ENCODE measurements at regions of chr3 and their contacts with region 1.

Region 1: GRCh38 chr3:113696658-113697499 is 437 bp upstream of the USF3 start:
- DNase-seq: peak; percentile 100
- ATAC-seq: peak; percentile 91 to 92
- H3K4me3 ChIP-seq: peak overlapping the region; percentile 76 to 91 (median 78)
- H3K27ac ChIP-seq: peak overlapping the region; percentile 95 to 99 (median 96)
- H3K4me1 ChIP-seq: peaks cover 48 to 51% of the 10 kb centered on the region in 2 donors
- H3K27me3 ChIP-seq: no peaks in the 10 kb centered on the region
- CTCF ChIP-seq: peak in 2 of 5 experiments; percentile 5 to 24
- POLR2A ChIP-seq: no peak

Region 2: DNA sequence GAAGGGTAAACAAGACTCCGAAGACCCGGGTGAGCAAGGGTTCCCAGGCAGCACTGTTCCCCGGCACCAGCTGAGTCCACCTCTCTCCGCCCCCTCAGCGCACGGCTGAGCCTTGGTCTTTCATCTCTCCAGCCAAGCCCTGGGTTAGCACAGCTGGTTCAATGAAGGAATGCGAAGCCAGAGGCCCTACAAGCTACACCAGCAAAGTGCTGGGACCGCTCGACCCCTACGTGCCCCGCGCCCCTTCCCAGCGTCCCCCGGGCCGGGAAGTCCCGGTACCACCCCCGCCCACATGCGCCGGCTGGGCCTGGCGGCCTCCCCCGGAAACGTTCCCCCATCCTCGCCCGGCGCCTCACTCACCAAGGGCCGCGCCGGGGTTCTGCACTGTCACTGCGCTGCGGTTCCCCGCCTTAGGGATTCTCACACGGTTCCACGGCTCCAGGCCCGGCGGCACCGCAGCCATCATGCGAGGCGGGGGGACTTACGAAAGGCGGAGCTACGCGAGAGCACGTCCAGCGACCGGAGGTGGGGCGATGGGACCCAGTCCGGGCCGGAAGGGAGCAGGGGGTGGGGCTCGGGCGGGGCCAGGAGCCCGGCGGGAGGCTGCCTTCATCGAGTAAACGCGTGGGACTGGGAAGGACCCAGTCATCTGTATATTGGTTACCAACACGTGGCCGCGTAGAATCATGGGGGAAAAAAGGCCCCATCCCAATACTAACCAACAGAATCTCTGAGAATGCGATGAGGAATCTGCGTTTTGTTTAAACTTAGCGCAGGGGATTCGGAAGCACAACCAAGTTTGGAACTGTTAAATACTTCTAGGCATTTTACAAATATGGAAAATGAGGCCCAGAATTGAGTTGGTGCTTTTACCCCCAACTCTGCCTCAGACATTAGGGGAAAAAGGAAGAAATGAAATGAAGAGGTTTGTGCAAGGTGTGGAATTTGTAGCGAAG is 677.4 kb before region 1 on chr3:
- in situ Hi-C with region 1: no loop called
- intact Hi-C with region 1: loop called (anchors 5 kb)
- DNase-seq: peak; percentile 82 to 87
- ATAC-seq: peak; percentile 93 to 94
- H3K4me3 ChIP-seq: peak overlapping the region; percentile 80 to 94 (median 90)
- H3K27ac ChIP-seq: peak overlapping the region; percentile 92 to 97 (median 94)
- H3K4me1 ChIP-seq: peaks cover 12 to 16% of the 10 kb centered on the region in 2 donors
- H3K27me3 ChIP-seq: no peaks in the 10 kb centered on the region
- CTCF ChIP-seq: no peak
- POLR2A ChIP-seq: peak; percentile 51 to 65

Region 3: DNA sequence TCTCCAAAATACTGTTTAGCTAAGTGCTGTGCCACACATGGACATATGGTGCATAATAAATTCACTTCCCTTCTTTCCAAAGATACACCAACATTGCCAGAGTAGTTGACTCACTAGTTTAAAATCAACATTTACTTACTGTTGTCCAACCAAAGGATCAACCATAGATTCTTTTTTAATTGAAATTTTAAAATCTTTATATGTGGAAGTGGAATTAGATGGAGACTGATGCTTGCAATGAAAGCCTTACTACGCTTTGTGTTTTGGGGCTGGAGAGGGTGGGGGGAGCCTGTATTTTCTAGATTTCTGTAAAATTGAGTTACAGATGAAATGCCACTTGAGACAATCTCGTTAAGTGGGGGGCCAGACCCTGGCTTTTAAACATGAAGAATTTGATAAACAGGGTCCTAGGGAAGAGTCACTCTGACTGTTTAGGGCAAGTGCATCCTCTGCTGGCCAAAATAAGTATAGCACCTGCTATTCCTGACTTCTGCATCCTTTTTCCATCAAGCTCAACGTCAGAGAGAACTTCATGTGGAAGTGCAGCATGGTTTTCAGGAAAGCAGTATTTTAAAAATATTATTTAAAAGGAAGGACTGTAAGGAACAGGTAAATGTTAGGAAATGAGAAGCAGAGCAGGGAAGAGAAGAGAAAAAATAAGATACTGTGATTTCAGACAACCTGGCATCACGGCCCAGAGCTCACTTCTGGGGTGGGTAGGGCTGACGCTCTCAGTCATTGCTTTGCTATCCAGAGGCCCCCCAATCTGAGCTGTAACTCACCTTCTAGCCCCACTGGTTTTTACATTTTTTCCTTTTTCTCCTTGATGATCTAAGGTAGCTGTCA is 408.9 kb before region 1 on chr3:
- in situ Hi-C with region 1: no loop called
- intact Hi-C with region 1: no loop called
- DNase-seq: no peak
- ATAC-seq: peak in 1 of 2 donors; percentile 59
- H3K4me3 ChIP-seq: no peak overlapping the region
- H3K27ac ChIP-seq: no peak overlapping the region
- H3K4me1 ChIP-seq: no peaks in the 10 kb centered on the region
- H3K27me3 ChIP-seq: no peaks in the 10 kb centered on the region
- CTCF ChIP-seq: peak; percentile 93 to 99 (median 96)
- POLR2A ChIP-seq: no peak

Region 4: DNA sequence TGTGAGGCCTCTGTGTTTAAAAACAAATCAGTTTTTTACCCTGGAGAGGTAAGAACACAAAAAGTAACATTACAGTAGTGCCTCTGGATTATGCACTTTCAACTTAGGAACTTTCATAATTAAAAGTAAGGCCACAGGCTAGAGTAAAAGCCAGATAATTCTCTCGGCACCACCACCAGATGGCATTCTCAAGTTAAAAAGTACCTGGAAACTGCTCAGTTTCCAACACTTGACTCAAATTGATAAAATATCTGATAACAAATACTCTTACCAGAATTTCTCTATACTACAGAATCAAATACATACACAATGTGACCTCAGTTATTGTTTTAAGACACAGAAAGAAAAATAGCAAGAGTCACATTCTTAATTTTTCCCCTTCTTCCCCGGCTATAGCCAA is 201.8 kb before region 1 on chr3:
- in situ Hi-C with region 1: no loop called
- intact Hi-C with region 1: loop called (anchors 5 kb)
- DNase-seq: peak in 1 of 2 donors; percentile 21
- ATAC-seq: peak; percentile 55 to 60
- H3K4me3 ChIP-seq: no peak overlapping the region
- H3K27ac ChIP-seq: peak overlapping the region in 1 of 4 donors; percentile 11
- H3K4me1 ChIP-seq: no peaks in the 10 kb centered on the region
- H3K27me3 ChIP-seq: no peaks in the 10 kb centered on the region
- CTCF ChIP-seq: peak in 4 of 5 experiments; percentile 4 to 52 (median 42)
- POLR2A ChIP-seq: no peak

Region 5: DNA sequence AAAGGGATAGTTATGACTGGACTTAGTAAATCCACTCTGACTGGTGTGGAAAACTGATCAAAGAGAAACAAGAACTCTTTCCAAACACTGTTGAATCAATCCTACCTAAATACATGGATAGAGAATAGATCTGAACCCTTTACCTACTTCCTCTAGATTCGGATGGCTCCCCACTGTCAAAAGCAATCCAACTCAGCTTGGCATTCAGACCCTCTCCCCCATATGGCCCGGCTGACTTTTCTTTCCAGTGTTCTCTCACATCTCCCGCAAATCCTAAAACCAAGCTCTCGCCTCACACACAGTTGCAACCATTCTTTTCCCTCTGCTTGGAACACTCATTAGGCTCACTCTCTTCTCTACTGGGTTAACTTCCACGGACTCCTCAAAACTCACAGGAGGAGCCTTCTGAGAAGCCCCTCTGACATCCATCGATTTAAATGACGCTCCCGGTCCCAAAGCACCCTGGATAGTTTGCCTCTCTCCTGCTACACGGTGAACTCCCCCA is 182.6 kb before region 1 on chr3:
- in situ Hi-C with region 1: loop called in 1 of 4 experiments (anchors 10 kb)
- intact Hi-C with region 1: no loop called
- DNase-seq: no peak
- ATAC-seq: peak; percentile 20 to 37
- H3K4me3 ChIP-seq: peak overlapping the region; percentile 83 to 94 (median 90)
- H3K27ac ChIP-seq: peak overlapping the region; percentile 81 to 89 (median 86)
- H3K4me1 ChIP-seq: peaks cover 8 to 9% of the 10 kb centered on the region in 2 donors
- H3K27me3 ChIP-seq: peaks cover 0 to 3% (median 0%) of the 10 kb centered on the region in 3 donors
- CTCF ChIP-seq: no peak
- POLR2A ChIP-seq: no peak

Region 6: DNA sequence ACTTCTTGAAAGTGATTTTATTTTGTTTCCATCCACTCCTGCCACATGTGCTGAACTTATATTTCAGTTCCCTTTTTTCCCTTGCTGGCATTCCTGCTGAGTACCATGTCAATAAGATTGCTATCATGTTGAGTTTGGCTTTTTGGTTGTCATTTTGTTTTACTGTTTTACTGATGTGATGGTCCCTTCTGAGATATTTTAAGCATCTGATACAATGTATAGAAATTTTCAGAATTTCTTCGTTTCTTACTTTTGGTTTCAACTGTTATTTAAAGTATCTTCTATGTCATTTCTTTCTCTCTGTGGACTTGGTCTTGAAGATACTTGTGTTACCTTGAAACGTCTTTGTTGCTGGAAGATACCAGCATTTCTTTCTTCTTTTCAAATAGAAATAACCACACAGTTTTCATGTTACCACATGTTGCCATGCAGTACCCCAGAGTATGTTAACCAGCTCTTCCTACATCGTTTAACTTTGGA is 150.4 kb before region 1 on chr3:
- in situ Hi-C with region 1: no loop called
- intact Hi-C with region 1: no loop called
- DNase-seq: no peak
- ATAC-seq: no peak
- H3K4me3 ChIP-seq: no peak overlapping the region
- H3K27ac ChIP-seq: no peak overlapping the region
- H3K4me1 ChIP-seq: no peaks in the 10 kb centered on the region
- H3K27me3 ChIP-seq: no peaks in the 10 kb centered on the region
- CTCF ChIP-seq: no peak
- POLR2A ChIP-seq: no peak

Region 7: DNA sequence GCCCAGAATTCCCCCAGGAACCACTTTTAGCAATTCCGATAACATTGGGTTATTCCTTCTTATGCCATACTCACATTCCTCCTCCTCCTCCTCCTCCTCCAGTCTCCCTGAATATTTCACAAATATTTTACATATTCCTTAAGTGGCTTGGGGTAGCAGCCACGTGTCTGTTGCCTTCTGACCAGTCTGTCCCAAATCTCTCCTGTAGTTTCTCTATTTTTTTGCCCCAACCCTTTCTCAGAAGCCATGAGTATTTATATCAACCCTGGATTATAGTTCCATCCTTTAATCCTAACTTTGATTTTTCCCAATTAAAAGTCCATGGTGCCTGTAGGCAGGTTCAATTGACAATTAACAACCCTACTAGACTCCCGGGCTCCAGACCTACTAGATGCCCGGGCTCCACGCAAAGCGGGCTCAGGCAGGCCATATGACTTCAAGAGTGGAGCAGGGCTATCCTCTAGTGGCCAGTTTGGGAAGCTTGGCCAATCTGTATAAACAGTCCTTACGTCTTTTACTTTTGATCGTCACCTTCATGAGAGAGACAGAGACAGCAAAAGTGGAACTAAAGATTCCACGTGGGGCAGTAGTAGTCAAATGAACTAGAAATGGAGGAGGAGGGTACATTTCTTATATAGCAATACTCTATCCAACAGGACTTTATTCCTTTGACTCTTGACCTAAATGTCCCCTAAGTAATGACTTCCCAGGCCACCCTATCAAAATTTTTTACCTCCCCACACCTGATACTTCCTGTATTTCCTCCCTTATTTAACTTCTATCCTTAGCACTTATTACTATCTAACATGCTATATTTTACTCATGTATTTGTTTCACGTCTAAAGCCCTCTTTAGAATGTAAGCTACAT is 70.1 kb before region 1 on chr3:
- in situ Hi-C with region 1: no loop called
- intact Hi-C with region 1: loop called (anchors 5 kb)
- DNase-seq: peak; percentile 38 to 64
- ATAC-seq: peak; percentile 72 to 76
- H3K4me3 ChIP-seq: peak overlapping the region in 3 of 4 donors; percentile 2 to 16 (median 9)
- H3K27ac ChIP-seq: peak overlapping the region; percentile 59 to 65 (median 61)
- H3K4me1 ChIP-seq: peaks cover 34 to 51% of the 10 kb centered on the region in 2 donors
- H3K27me3 ChIP-seq: no peaks in the 10 kb centered on the region
- CTCF ChIP-seq: peak; percentile 79 to 97 (median 89)
- POLR2A ChIP-seq: no peak

Region 8: GRCh38 chr3:113660896-113661295 is 36.0 kb before region 1 on chr3:
- in situ Hi-C with region 1: no loop called
- intact Hi-C with region 1: loop called (anchors 2 kb)
- DNase-seq: peak; percentile 76 to 88
- ATAC-seq: peak; percentile 97 to 98
- H3K4me3 ChIP-seq: peak overlapping the region in 3 of 4 donors; percentile 18 to 29 (median 19)
- H3K27ac ChIP-seq: peak overlapping the region; percentile 86 to 89 (median 88)
- H3K4me1 ChIP-seq: peaks cover 44 to 71% of the 10 kb centered on the region in 2 donors
- H3K27me3 ChIP-seq: no peaks in the 10 kb centered on the region
- CTCF ChIP-seq: no peak
- POLR2A ChIP-seq: peak in 1 of 2 donors; percentile 15

Region 9: DNA sequence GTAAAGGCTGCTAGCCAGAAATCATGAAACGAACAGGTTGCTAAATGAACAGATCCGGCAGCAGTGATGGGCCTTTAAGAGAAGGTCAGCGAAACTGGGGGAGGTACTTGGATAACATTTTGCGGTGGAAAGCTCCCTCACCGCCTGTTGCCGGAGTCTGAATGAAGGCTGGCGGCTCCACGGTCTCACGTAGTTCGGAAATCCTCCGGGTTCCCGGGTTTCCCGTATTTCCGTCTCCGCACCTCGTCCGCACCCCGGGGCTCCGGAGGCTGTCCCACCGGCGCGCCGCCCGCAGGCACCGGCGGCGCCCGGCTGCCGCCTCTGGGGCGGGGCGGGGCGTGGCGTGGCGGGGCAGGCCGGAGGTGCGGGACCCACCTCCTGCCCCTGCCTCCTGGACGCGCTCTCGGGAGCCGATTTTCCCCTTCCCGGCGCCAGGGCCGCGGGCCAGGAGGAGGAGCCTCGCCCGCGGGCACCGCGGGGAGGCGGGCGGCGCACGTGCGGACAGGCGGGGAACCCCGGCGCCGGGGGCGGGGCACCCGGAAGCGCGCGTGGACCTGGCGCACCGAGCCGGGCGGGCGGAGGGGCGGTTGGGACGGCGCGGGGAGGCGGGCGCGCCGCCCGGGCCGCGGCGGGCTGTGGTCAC is 250.6 kb after region 1 on chr3 and contains the start of gene ZDHHC23:
- in situ Hi-C with region 1: no loop called
- intact Hi-C with region 1: loop called (anchors 2 kb)
- DNase-seq: peak; percentile 67 to 78
- ATAC-seq: peak; percentile 84 to 91
- H3K4me3 ChIP-seq: peak within 1 kb of the TSS; percentile 77 to 86 (median 80)
- H3K27ac ChIP-seq: peak within 1 kb of the TSS; percentile 68 to 80 (median 72)
- H3K4me1 ChIP-seq: peaks cover 0 to 2% of the 10 kb centered on the region in 2 donors
- H3K27me3 ChIP-seq: no peaks in the 10 kb centered on the region
- CTCF ChIP-seq: no peak
- POLR2A ChIP-seq: peak in 1 of 2 donors; percentile 24
- total RNA-seq, gene ZDHHC23: 0.92 to 3.5 (median 2.3) TPM

Region 10: DNA sequence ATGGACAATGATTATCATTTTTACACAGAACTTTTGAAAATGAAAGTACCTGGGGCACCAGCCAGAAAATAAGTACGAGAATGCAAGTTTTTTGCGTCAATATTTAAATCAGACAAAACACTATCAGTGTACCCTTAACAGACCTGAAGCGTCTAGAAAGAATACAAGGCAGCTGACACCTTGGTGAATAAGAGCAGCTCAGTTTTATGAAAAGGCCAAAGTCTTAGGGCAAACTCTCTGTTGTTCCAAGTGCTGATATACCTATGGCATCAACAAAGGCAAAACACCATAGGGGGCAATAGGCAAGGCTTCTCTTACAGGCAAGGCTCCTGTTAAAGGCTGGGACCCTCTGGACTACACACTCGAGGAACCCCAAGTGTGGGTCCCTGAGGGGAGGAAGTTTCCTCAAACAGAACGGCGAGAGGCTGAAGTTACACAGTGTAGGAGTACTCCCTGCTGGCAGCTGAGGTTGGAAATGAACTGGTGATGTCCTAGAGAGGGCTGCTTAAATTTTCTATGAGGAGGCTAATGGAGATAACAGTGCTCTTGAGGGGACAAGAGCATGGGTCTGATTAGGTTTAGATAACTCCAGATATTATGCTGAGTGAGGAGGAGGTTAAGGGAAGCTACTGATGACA is 888.0 kb after region 1 on chr3:
- in situ Hi-C with region 1: no loop called
- intact Hi-C with region 1: no loop called
- DNase-seq: no peak
- ATAC-seq: peak; percentile 59 to 62
- H3K4me3 ChIP-seq: peak overlapping the region; percentile 14 to 27 (median 22)
- H3K27ac ChIP-seq: peak overlapping the region; percentile 69 to 77 (median 72)
- H3K4me1 ChIP-seq: peaks cover 35 to 36% of the 10 kb centered on the region in 2 donors
- H3K27me3 ChIP-seq: no peaks in the 10 kb centered on the region
- CTCF ChIP-seq: no peak
- POLR2A ChIP-seq: no peak

Measured in gastrocnemius medialis (tissue), 4 donors.